Heart left ventricle (tissue), 16 donors: ENCODE measurements at regions of chr3 and their contacts with region 1.

Region 1: GRCh38 chr3:192423003-192423349 is 304.4 kb downstream of the FGF12 start:
- DNase-seq: no peak
- ATAC-seq: peak in 1 of 4 donors; percentile 38
- H3K4me3 ChIP-seq: no peak overlapping the region
- H3K27ac ChIP-seq: no peak overlapping the region
- H3K4me1 ChIP-seq: peaks cover 0 to 7% (median 0%) of the 10 kb centered on the region in 12 donors
- H3K27me3 ChIP-seq: no peaks in the 10 kb centered on the region
- CTCF ChIP-seq: peak in 9 of 12 donors; percentile 11 to 61 (median 32)
- POLR2A ChIP-seq: no peak

Region 2: GRCh38 chr3:191715585-191715984 is 707.4 kb before region 1 on chr3:
- intact Hi-C with region 1: loop called in 1 of 10 experiments (anchors 10 kb)
- DNase-seq: no peak
- ATAC-seq: peak; percentile 64 to 82 (median 78)
- H3K4me3 ChIP-seq: no peak overlapping the region
- H3K27ac ChIP-seq: peak overlapping the region in 5 of 12 donors; percentile 6 to 68 (median 35)
- H3K4me1 ChIP-seq: peaks cover 0 to 10% (median 2%) of the 10 kb centered on the region in 12 donors
- H3K27me3 ChIP-seq: no peaks in the 10 kb centered on the region
- CTCF ChIP-seq: no peak
- POLR2A ChIP-seq: no peak

Region 3: DNA sequence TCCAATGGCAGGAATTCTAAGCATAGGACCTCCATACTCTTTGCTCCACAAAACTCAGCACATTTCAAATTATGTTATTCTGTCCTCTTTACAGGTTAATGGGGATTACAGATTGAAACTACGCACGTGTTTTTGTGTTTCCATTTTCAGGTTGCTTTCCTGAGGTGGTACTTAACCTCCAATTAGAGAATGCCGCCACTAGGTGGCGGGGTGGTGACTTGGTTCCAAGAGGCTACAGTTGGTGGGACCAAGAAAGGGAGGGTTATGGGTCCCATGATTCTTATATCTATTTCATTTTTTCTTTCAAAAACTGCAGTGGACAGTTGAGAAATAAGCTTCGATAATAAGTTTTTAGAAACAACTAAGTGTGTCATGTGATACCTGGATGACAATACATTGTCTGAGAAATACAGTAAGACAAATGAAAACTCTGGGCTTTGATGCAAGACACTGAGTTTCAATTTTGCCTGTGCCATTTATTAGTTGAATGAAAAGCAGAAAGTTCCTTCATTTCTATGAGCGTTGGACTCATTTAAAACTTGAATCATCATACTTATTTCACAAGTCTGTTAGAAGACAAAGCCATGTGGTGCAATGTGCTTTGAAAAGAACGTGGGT is 234.6 kb before region 1 on chr3:
- intact Hi-C with region 1: loop called in 5 of 10 experiments (anchors 5 to 10 kb)
- DNase-seq: peak in 4 of 5 donors; percentile 22 to 52 (median 30)
- ATAC-seq: peak in 1 of 4 donors; percentile 27
- H3K4me3 ChIP-seq: no peak overlapping the region
- H3K27ac ChIP-seq: no peak overlapping the region
- H3K4me1 ChIP-seq: peaks cover 0 to 9% (median 2%) of the 10 kb centered on the region in 12 donors
- H3K27me3 ChIP-seq: no peaks in the 10 kb centered on the region
- CTCF ChIP-seq: peak; percentile 45 to 69 (median 60)
- POLR2A ChIP-seq: no peak